ENCODE measurements at regions of chr4 and their contacts with region 1.

Region 1: GRCh38 chr4:144787365-144788258 is 141.7 kb downstream of the HHIP start:
- DNase-seq: peak; percentile 49
- ATAC-seq: no peak
- H3K4me3 ChIP-seq: no peak overlapping the region
- H3K27ac ChIP-seq: no peak overlapping the region
- H3K4me1 ChIP-seq: no peaks in the 10 kb centered on the region
- H3K27me3 ChIP-seq: no peaks in the 10 kb centered on the region; the same call in 1 of the 2 replicates
- CTCF ChIP-seq: peak; percentile 48
- POLR2A ChIP-seq: no peak
- RAD21 ChIP-seq: peak; percentile 60

Region 2: DNA sequence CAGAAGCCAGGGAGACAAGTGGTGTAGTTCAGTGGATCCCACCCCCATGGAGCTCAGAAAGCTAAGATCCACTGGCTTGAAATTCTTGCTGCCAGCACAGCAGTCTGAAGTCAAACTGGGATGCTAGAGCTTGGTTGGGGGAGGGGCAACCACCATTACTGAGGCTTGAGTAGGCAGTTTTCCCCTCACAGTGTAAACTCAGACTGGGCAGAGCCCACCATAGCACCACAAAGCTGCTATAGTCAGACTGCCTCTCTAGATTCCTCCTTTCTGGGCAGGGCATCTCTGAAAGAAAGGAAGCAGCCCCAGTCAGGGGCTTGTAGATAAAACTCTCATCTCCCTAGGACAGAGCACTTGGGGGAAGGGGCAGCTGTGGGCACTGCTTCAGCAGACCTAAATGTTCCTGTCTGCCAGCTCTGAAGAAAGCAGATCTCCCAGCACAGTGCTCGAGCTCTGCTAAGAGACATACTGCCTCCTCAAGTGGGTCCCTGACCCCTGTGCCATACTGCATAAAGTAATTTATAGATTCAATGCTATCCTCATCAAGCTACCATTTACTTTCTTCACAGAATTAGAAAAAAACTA is 21.5 kb after region 1 on chr4:
- CTCF ChIA-PET with region 1: no interaction called
- POLR2A ChIA-PET with region 1: no interaction called
- dilution Hi-C with region 1: no loop called
- in situ Hi-C with region 1: no loop called
- intact Hi-C with region 1: no loop called
- DNase-seq: no peak
- ATAC-seq: no peak
- H3K4me3 ChIP-seq: no peak overlapping the region
- H3K27ac ChIP-seq: no peak overlapping the region
- H3K4me1 ChIP-seq: no peaks in the 10 kb centered on the region
- H3K27me3 ChIP-seq: no peaks in the 10 kb centered on the region
- CTCF ChIP-seq: no peak
- POLR2A ChIP-seq: no peak
- RAD21 ChIP-seq: no peak

Region 3: DNA sequence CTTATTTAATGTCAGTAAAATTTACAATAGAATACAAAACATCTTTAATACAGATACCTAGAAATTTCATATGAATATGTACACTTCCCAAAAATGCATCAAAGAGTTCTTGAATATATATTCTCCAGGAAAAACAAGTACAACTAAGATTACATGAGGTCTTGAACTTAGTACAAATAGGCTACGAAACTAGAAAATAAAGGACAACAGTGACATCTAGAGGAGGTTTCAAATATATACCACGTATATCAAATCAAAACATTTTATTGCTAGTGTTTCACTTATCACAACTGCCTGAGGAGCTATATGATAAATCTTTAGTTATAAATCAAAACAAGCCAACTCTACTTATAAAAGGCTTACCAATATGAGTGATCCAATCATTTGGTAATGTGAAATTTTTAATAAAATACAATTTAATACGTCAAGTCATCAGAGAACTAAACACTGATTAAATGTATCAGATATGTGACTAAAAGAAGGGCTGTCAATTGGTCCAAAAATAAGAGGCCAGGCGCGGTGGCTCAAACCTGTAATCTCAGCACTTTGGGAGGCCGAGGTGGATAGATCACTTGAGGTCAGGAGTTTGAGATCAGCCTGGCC is 273.8 kb after region 1 on chr4:
- CTCF ChIA-PET with region 1: interaction called, 3 read pairs
- POLR2A ChIA-PET with region 1: no interaction called
- dilution Hi-C with region 1: no loop called
- in situ Hi-C with region 1: no loop called
- intact Hi-C with region 1: loop called (anchors 1 kb)
- DNase-seq: peak; percentile 67
- ATAC-seq: peak; percentile 77
- H3K4me3 ChIP-seq: no peak overlapping the region
- H3K27ac ChIP-seq: no peak overlapping the region
- H3K4me1 ChIP-seq: no peaks in the 10 kb centered on the region
- H3K27me3 ChIP-seq: no peaks in the 10 kb centered on the region
- CTCF ChIP-seq: peak; percentile 55
- POLR2A ChIP-seq: no peak
- RAD21 ChIP-seq: peak; percentile 67

Region 4: GRCh38 chr4:145180298-145181090 is 392.9 kb after region 1 on chr4 and contains the start of gene OTUD4:
- CTCF ChIA-PET with region 1: no interaction called
- POLR2A ChIA-PET with region 1: no interaction called
- dilution Hi-C with region 1: no loop called
- in situ Hi-C with region 1: no loop called
- intact Hi-C with region 1: no loop called
- DNase-seq: peak; percentile 94
- ATAC-seq: peak; percentile 88
- H3K4me3 ChIP-seq: peak within 1 kb of the TSS; percentile 77
- H3K27ac ChIP-seq: peak within 1 kb of the TSS; percentile 88
- H3K4me1 ChIP-seq: no peaks in the 10 kb centered on the region; the same call in 1 of the 2 replicates
- H3K27me3 ChIP-seq: no peaks in the 10 kb centered on the region
- CTCF ChIP-seq: peak; percentile 22; the same call in 1 of the 2 replicates
- POLR2A ChIP-seq: no peak
- RAD21 ChIP-seq: no peak
- total RNA-seq, gene OTUD4: 12.4 and 16.9 TPM in 2 replicates

Measured in IMR-90 (cell line).